ENCODE measurements at regions of chr10 and their contacts with region 1.

Region 1: GRCh38 chr10:122374237-122374869 is at the start of gene PLEKHA1:
- DNase-seq: peak; percentile 93 to 98
- H3K4me3 ChIP-seq: peak within 1 kb of the TSS; percentile 95 to 99
- H3K27ac ChIP-seq: peak within 1 kb of the TSS; percentile 94 to 98
- H3K4me1 ChIP-seq: peaks cover 0 to 42% (median 9%) of the 10 kb centered on the region in 4 donors
- H3K27me3 ChIP-seq: no peaks in the 10 kb centered on the region
- CTCF ChIP-seq: peak in 1 of 2 experiments; percentile 24

Region 2: GRCh38 chr10:122139627-122140170 is 234.7 kb before region 1 on chr10:
- intact Hi-C with region 1: loop called (anchors 10 kb)
- DNase-seq: no peak
- H3K4me3 ChIP-seq: no peak overlapping the region
- H3K27ac ChIP-seq: peak overlapping the region; percentile 81 to 88
- H3K4me1 ChIP-seq: peaks cover 0 to 51% (median 49%) of the 10 kb centered on the region in 4 donors
- H3K27me3 ChIP-seq: no peaks in the 10 kb centered on the region
- CTCF ChIP-seq: no peak

Region 3: DNA sequence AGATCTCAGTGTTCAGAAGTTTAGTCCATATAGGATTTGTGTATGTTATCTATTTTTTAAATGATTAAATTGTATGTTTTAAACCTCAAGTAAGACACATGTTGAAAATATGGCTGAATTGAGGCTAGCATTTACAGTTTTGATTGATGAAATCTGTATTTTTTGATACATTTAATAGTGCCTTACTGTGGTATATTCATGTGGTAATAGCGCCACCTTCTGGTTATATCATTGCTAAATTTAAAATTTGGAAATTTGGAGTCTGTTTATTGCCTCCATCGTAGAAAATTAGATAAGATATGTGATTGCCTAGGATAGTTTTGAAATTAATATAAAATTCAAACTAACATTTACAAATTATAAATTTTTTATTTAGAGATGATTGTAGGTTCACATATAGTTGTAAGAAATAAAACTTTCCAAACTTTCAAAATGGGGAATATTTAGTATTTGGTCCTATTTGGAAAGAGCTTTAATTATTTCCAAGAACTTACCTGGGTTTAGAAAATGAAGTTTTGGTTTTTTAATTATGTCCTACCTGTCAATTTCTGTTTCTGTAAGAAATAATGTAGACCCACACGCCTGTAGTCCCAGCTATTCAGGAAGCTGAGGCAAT is 61.0 kb after region 1 on chr10:
- intact Hi-C with region 1: loop called (anchors 10 kb)
- DNase-seq: no peak
- H3K4me3 ChIP-seq: no peak overlapping the region
- H3K27ac ChIP-seq: no peak overlapping the region
- H3K4me1 ChIP-seq: no peaks in the 10 kb centered on the region
- H3K27me3 ChIP-seq: no peaks in the 10 kb centered on the region
- CTCF ChIP-seq: peak; percentile 55 to 80

Measured in tibial artery (tissue), 4 donors.